GM13977 (cell line): ENCODE measurements at regions of chr1 and their contacts with region 1.

Region 1: DNA sequence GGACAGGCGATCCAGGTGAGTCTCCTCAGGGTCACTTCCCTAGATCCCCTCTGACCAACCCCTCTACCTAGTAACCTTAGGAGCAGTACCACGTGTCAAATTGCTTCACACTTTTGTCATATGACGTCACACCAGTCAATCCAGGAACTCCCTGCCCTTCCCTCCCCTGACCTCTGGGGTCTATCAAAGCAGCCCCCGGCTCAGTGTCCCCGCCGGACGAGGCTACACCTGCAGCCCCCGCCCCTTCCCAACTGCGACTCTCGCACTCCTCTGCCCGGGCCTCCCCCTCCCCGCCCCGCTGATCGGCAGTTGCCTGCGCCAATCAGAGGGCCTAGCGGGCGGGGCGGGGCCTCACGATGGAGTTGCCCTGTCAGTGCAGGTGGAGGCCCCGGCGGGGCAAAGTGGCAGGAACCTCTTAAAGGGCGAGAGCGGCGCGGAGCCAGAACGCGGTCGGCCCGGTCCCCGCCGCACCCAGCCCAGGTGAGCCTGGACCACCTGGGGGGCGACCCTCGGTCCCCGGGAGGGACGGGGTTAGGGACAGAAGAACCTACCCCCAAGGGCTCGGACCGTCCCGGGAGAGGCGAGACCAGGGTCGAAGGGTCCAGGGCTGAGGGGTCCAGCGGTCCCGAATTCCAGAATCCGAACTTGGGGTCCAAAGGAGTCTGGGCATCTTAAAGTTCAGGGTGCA is 27.5 kb upstream of the EPB41 start:
- DNase-seq: peak; percentile 98
- CTCF ChIP-seq: no peak

Region 2: GRCh38 chr1:29033829-29034466 is 147.1 kb after region 1 on chr1:
- in situ Hi-C with region 1: loop called (anchors 5 kb)
- DNase-seq: peak; percentile 60
- CTCF ChIP-seq: peak; percentile 57

Region 3: DNA sequence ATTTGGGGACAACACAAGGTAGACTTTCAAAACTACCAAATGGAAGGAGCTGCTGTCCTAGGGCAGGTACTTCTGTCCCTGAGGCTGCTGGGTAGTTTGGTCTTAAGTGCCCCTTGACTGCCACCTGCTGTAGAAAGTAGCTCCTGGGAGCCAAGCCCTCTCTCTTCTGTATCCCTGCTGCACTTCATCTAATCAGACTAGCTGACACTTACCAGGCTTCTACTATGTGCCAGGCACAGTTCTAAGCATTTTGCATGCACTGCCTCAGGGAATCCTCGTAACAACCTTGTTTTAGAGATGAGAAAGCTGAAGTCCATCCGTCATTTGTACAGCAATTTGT is 310.7 kb after region 1 on chr1:
- in situ Hi-C with region 1: loop called (anchors 10 kb)
- DNase-seq: no peak
- CTCF ChIP-seq: peak; percentile 44